HEK293 (cell line): ENCODE measurements at regions of chr6 and their contacts with region 1.

Region 1: GRCh38 chr6:111011360-111012142 is 29.7 kb downstream of the RPF2 start:
- H3K4me3 ChIP-seq: no peak overlapping the region
- H3K27ac ChIP-seq: no peak overlapping the region
- H3K4me1 ChIP-seq: no peaks in the 10 kb centered on the region
- CTCF ChIP-seq: peak; percentile 71

Region 2: GRCh38 chr6:110476046-110476849 is 535.3 kb before region 1 on chr6 and contains the start of gene SLC22A16:
- CTCF ChIA-PET with region 1: no interaction called
- POLR2A ChIA-PET with region 1: no interaction called
- H3K4me3 ChIP-seq: no peak within 1 kb of the TSS
- H3K27ac ChIP-seq: no peak within 1 kb of the TSS
- H3K4me1 ChIP-seq: no peaks in the 10 kb centered on the region
- CTCF ChIP-seq: no peak

Region 3: DNA sequence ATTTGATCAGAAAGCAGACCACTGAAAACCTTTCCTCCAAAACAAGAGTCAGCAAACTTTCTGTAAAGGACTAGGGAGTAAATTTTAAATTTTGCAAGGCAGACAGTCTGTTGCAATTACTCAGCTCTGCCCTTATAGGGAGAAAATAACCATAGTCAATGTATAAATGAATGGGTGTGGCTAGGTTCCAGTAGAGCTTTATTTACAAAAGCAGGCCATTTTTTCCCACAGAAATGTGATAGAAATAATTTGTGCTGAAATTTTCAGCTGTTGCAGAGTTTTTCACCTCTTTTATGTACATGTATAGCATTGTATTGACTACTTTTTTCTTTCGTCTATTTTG is 129.3 kb before region 1 on chr6:
- CTCF ChIA-PET with region 1: no interaction called
- POLR2A ChIA-PET with region 1: no interaction called
- H3K4me3 ChIP-seq: no peak overlapping the region
- H3K27ac ChIP-seq: no peak overlapping the region
- H3K4me1 ChIP-seq: peaks cover 35% of the 10 kb centered on the region
- CTCF ChIP-seq: no peak

Region 4: DNA sequence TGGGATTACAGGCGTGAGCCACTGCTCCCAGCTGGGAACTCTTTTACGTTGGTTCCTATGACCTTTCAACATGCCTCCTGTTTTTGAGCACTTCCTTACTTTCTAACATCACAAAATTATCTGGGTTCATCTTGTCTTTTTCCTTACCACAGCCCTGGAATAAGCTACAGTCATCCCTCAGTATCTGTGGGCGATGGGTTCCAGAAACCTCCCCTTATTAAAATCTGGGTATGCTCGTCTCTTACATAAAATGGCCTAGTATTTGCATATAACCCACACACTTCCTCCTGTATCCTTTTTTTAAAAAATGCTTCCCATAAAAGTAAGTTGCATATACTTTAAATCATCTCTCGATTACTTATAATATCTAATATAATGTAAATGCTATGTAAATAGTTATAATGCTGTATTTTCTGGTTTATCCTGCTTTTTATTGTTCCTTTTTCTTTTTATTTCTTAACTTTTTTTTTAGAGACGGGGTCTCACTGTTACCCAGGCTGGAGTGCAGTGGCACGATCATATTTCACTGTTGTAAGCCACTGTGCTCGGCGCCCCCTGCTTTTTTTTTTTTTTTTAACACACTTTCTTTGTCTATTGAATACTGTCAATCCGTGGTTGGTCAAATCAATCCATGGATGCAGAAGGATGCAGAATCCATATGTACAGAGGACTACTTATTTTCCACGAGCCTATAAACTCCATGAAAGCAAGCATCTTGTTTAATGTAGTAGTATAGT is 20.5 kb before region 1 on chr6:
- CTCF ChIA-PET with region 1: interaction called, 16 read pairs
- POLR2A ChIA-PET with region 1: no interaction called
- H3K4me3 ChIP-seq: no peak overlapping the region
- H3K27ac ChIP-seq: no peak overlapping the region
- H3K4me1 ChIP-seq: no peaks in the 10 kb centered on the region
- CTCF ChIP-seq: no peak

Region 5: GRCh38 chr6:111030008-111031007 is 18.8 kb after region 1 on chr6:
- CTCF ChIA-PET with region 1: interaction called, 28 read pairs
- POLR2A ChIA-PET with region 1: no interaction called
- H3K4me3 ChIP-seq: no peak overlapping the region
- H3K27ac ChIP-seq: no peak overlapping the region
- H3K4me1 ChIP-seq: peaks cover 5% of the 10 kb centered on the region
- CTCF ChIP-seq: no peak

Region 6: DNA sequence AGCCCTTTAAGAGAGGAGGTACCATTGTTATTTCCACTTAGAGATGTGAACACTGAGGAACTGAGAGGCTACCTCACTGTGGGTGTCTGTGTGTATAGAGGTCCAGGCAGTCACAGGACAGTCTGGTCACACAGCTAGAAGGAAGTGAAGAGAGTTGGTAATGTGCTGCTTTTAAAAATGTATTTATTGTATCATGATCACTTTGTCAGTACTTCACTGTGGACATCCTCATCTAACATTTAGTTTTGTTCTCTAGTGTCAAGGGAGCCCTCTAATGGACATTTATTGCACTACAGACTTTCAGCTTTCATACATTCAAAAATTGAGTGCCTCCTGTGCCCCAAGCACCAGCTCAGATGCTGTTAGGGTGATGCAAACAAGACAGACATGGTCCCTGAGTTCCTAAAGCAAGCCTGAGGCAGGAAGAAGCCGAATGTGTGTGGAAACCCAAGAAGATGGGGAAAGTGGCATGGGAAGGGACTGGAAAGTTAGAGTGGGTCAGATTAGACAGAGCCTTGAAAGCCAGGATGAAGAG is 198.7 kb after region 1 on chr6:
- CTCF ChIA-PET with region 1: interaction called, 109 read pairs
- POLR2A ChIA-PET with region 1: no interaction called
- H3K4me3 ChIP-seq: no peak overlapping the region
- H3K27ac ChIP-seq: no peak overlapping the region
- H3K4me1 ChIP-seq: no peaks in the 10 kb centered on the region
- CTCF ChIP-seq: no peak

Region 7: GRCh38 chr6:111259089-111259831 is 247.7 kb after region 1 on chr6:
- CTCF ChIA-PET with region 1: interaction called, 17 read pairs
- POLR2A ChIA-PET with region 1: interaction called, 5 read pairs
- H3K4me3 ChIP-seq: peak overlapping the region; percentile 82
- H3K27ac ChIP-seq: peak overlapping the region; percentile 58
- H3K4me1 ChIP-seq: no peaks in the 10 kb centered on the region
- CTCF ChIP-seq: peak; percentile 95

Region 8: GRCh38 chr6:111306104-111306888 is 294.7 kb after region 1 on chr6:
- CTCF ChIA-PET with region 1: no interaction called
- POLR2A ChIA-PET with region 1: no interaction called
- H3K4me3 ChIP-seq: no peak overlapping the region
- H3K27ac ChIP-seq: no peak overlapping the region
- H3K4me1 ChIP-seq: peaks cover 9% of the 10 kb centered on the region
- CTCF ChIP-seq: no peak